PC-9 (cell line): ENCODE measurements at regions of chr5 and their contacts with region 1.

Region 1: GRCh38 chr5:13448843-13449242 is 495.6 kb downstream of the DNAH5 start:
- DNase-seq: no peak
- H3K4me3 ChIP-seq: no peak overlapping the region
- H3K27ac ChIP-seq: no peak overlapping the region
- H3K4me1 ChIP-seq: no peaks in the 10 kb centered on the region
- H3K27me3 ChIP-seq: 0 out of 2 replicates have a peak, but pooled peaks cover 10% of the 10 kb centered on the region
- CTCF ChIP-seq: no peak

Region 2: GRCh38 chr5:11791436-11792173 is 1657.2 kb before region 1 on chr5:
- CTCF ChIA-PET with region 1: no interaction called
- POLR2A ChIA-PET with region 1: no interaction called
- intact Hi-C with region 1: loop called (anchors 5 kb)
- DNase-seq: no peak
- H3K4me3 ChIP-seq: no peak overlapping the region
- H3K27ac ChIP-seq: no peak overlapping the region
- H3K4me1 ChIP-seq: no peaks in the 10 kb centered on the region
- H3K27me3 ChIP-seq: no peaks in the 10 kb centered on the region; the same call in 1 of the 2 replicates
- CTCF ChIP-seq: no peak

Region 3: GRCh38 chr5:13278148-13278547 is 170.7 kb before region 1 on chr5:
- CTCF ChIA-PET with region 1: no interaction called
- POLR2A ChIA-PET with region 1: no interaction called
- intact Hi-C with region 1: no loop called
- DNase-seq: no peak
- H3K4me3 ChIP-seq: no peak overlapping the region
- H3K27ac ChIP-seq: no peak overlapping the region
- H3K4me1 ChIP-seq: no peaks in the 10 kb centered on the region
- H3K27me3 ChIP-seq: no peaks in the 10 kb centered on the region
- CTCF ChIP-seq: peak; percentile 72